MCF 10A (cell line): ENCODE measurements at regions of chrX and their contacts with region 1.

Region 1: GRCh38 chrX:16695079-16695676 is 17.3 kb downstream of the CTPS2 start:
- DNase-seq: peak; percentile 68
- H3K4me3 Mint-ChIP-seq: no peak overlapping the region
- H3K27ac Mint-ChIP-seq: no peak overlapping the region
- H3K4me1 Mint-ChIP-seq: no peaks in the 10 kb centered on the region
- H3K27me3 Mint-ChIP-seq: peaks cover 47% of the 10 kb centered on the region
- CTCF ChIP-seq: peak; percentile 80

Region 2: DNA sequence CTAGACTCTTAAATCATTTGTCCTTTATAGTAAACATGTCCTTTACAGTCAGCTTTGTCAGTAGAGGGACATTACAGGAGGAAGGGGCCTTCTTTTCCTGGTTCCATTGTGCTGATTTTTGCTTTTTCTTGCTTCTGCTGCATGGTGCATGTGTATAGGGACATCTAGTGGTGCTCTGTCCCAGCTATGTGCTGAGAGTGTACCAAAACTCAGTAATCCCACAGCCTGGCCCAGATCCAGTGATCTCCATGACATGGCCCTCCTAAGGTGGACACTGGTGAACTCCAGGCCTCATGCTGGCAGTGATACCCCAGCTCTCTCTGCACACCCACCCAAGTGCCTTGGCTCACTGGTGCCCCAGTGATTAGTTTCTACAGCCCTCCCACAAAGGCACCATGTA is 482.7 kb before region 1 on chrX:
- CTCF ChIA-PET with region 1: no interaction called
- POLR2A ChIA-PET with region 1: no interaction called
- intact Hi-C with region 1: no loop called
- DNase-seq: peak; percentile 25
- H3K4me3 Mint-ChIP-seq: no peak overlapping the region
- H3K27ac Mint-ChIP-seq: no peak overlapping the region
- H3K4me1 Mint-ChIP-seq: peaks cover 5% of the 10 kb centered on the region
- H3K27me3 Mint-ChIP-seq: peaks cover 13% of the 10 kb centered on the region
- CTCF ChIP-seq: peak; percentile 34

Region 3: DNA sequence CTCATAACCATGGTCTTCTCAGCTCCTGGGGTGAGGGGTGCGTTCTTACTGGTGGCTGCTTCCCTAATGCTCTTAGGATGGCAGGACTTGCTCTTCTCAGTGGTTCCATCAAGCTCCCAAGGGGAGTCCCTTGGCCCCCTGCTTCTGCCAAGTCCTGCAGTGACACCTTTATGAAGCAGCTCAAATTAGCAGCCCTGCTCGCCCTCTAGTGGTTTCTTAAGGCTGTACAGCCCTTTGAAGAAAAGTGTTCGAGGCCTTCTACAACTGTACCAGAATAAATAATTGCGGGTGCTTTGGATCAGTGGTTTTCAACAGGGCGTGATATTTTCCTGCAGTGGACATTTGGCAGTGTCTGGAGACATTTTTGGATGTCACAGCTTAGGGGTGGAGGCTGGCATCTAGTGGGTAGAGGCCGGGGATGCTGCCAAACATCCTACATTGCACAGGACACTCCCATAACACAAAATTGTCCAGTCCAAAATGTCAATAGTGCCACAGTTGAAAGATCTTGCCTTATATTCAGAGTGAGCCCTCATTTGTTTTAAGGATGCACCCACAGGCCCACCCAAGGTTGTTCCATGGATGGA is 249.9 kb before region 1 on chrX:
- CTCF ChIA-PET with region 1: interaction called, 16 read pairs
- POLR2A ChIA-PET with region 1: no interaction called
- intact Hi-C with region 1: no loop called
- DNase-seq: peak; percentile 70
- H3K4me3 Mint-ChIP-seq: no peak overlapping the region
- H3K27ac Mint-ChIP-seq: no peak overlapping the region
- H3K4me1 Mint-ChIP-seq: no peaks in the 10 kb centered on the region
- H3K27me3 Mint-ChIP-seq: peaks cover 45% of the 10 kb centered on the region
- CTCF ChIP-seq: peak; percentile 84

Region 4: GRCh38 chrX:16711219-16712111 is 16.3 kb after region 1 on chrX:
- CTCF ChIA-PET with region 1: interaction called, 15 read pairs
- POLR2A ChIA-PET with region 1: no interaction called
- intact Hi-C with region 1: no loop called
- DNase-seq: peak; percentile 5
- H3K4me3 Mint-ChIP-seq: peak overlapping the region; percentile 86
- H3K27ac Mint-ChIP-seq: peak overlapping the region; percentile 32
- H3K4me1 Mint-ChIP-seq: no peaks in the 10 kb centered on the region
- H3K27me3 Mint-ChIP-seq: peaks cover 48% of the 10 kb centered on the region
- CTCF ChIP-seq: no peak